Colonic mucosa (tissue), 4 donors: ENCODE measurements at regions of chr5 and their contacts with region 1.

Region 1: DNA sequence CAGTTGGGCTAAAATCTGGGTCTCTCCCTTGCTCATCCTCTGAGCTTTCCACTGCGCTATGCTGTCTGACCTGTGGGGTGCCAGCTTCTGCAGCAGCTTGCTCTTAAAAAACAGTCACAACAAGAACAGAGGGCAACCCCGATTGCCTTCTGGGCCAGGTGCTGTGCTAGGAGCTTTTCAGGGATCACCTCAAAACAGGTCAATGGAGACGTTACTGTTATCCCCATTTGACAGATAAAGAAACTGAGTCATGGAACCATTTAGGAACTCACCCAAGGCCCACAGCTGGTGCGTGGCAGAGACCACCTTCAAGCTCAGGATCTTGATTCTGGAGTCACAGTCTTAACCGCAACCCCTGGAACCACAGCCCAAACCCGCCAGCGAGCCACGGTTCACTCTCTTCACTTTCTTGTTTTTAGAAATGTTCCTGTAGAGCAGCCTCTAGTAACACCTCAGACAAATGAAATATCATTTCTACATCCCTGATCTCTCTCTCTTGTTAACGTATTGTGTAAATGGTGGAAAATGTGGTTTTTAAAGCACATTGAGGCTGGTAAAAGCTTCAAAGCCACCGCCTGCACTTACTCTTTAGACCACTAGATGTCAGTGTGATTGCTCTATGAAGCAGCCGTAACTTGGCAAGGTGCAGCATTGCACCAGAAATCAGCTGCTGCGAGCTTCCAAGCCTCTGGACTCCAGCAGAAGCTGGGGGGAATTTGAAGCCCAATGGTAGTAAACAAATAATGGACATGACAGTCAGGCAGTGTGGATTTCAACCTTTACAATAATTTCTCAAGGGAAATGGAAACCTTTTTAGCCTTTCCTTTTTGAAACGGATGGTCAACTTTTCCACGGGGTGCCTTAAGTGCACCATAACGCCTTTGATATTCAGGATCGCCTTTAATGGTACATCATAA is 1.7 kb downstream of the FYB1 start:
- DNase-seq: peak; percentile 78
- H3K4me3 ChIP-seq: peak overlapping the region; percentile 9
- H3K27ac ChIP-seq: peak overlapping the region; percentile 27
- H3K4me1 ChIP-seq: no peaks in the 10 kb centered on the region
- H3K27me3 ChIP-seq: no peaks in the 10 kb centered on the region
- CTCF ChIP-seq: peak; percentile 97

Region 2: GRCh38 chr5:38979535-38979934 is 238.1 kb before region 1 on chr5:
- intact Hi-C with region 1: no loop called
- DNase-seq: no peak
- H3K4me3 ChIP-seq: no peak overlapping the region
- H3K27ac ChIP-seq: no peak overlapping the region
- H3K4me1 ChIP-seq: no peaks in the 10 kb centered on the region
- H3K27me3 ChIP-seq: no peaks in the 10 kb centered on the region
- CTCF ChIP-seq: no peak

Region 3: DNA sequence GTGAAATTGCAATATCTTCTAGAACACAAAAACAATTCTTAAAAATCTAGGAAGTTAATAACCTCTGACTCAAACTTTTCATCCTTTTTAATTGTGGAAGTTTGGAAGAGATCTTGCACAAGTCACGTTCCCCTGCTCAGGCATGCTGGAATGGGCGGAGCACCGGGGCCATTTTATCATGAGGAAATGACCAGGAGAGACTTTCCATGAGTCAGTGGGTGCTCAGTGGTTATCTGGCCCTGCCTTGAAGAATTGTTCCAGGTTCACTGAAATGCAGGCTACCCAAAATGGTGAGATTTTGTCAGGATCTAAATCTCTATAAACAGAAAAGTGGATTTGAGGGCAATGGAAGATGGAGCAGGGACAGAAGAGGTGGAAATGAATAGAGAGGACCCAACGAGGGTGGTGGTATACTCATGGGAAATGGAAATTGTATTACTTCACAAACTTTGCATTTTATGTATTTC is 59.5 kb before region 1 on chr5:
- intact Hi-C with region 1: no loop called
- DNase-seq: no peak
- H3K4me3 ChIP-seq: no peak overlapping the region
- H3K27ac ChIP-seq: no peak overlapping the region
- H3K4me1 ChIP-seq: no peaks in the 10 kb centered on the region
- H3K27me3 ChIP-seq: no peaks in the 10 kb centered on the region
- CTCF ChIP-seq: no peak

Region 4: GRCh38 chr5:39283231-39283818 is 65.7 kb after region 1 on chr5:
- intact Hi-C with region 1: loop called (anchors 2 kb)
- DNase-seq: peak; percentile 63
- H3K4me3 ChIP-seq: no peak overlapping the region
- H3K27ac ChIP-seq: no peak overlapping the region
- H3K4me1 ChIP-seq: no peaks in the 10 kb centered on the region
- H3K27me3 ChIP-seq: no peaks in the 10 kb centered on the region
- CTCF ChIP-seq: peak; percentile 65

Region 5: DNA sequence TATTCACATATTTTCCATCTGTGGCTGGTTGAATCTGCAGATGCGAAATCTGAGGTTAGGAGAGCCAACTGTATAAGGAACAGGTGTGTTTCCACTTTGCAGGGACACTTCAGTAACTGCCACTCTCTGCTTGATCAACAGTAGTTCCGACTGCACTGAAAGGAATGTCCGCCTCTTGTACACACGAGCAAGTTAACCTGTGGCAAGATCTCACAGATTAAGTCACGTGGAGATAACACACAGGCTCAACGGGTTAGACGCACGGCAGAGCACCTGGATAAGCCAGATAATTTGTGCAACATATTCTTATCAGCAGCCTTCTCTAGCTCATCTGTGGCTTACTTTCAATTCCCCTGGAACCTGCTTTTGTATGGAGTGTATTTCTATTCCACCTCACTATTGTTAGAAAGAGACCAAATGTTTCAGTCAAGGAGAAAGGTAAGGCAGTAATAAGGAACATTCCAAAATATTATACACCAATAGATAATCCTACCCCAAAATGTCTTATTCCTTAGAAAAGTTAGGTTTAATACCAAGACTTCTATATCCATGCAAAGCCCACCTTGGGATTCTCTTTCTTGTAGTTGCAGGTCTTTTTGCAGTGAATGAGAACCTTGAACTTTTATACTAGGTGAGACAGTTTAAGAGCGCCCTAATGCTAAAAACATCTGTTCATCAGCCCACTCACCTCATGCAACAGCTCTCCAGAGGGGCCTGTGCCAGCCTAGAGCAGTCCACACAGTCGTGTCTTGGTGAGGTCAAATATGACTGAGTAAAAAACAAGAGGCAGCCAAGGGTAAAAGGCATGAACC is 153.1 kb after region 1 on chr5:
- intact Hi-C with region 1: loop called (anchors 5 kb)
- DNase-seq: peak; percentile 44
- H3K4me3 ChIP-seq: no peak overlapping the region
- H3K27ac ChIP-seq: no peak overlapping the region
- H3K4me1 ChIP-seq: no peaks in the 10 kb centered on the region
- H3K27me3 ChIP-seq: no peaks in the 10 kb centered on the region
- CTCF ChIP-seq: no peak

Region 6: GRCh38 chr5:39547553-39548154 is 330.0 kb after region 1 on chr5:
- intact Hi-C with region 1: loop called (anchors 2 kb)
- DNase-seq: peak; percentile 71
- H3K4me3 ChIP-seq: no peak overlapping the region
- H3K27ac ChIP-seq: no peak overlapping the region
- H3K4me1 ChIP-seq: no peaks in the 10 kb centered on the region
- H3K27me3 ChIP-seq: no peaks in the 10 kb centered on the region
- CTCF ChIP-seq: peak; percentile 58